Naive thymus-derived CD4-positive, alpha-beta T cell (primary cell): ENCODE measurements at regions of chr10 and their contacts with region 1.

Region 1: GRCh38 chr10:77111611-77112550 is 525.7 kb downstream of the KCNMA1 start:
- DNase-seq: peak in 5 of 9 donors; percentile 12 to 39 (median 28)
- ATAC-seq: peak; percentile 57
- H3K4me3 ChIP-seq: no peak overlapping the region
- H3K4me3 Mint-ChIP-seq: no peak overlapping the region
- H3K27ac ChIP-seq: no peak overlapping the region
- H3K27ac Mint-ChIP-seq: no peak overlapping the region
- H3K4me1 ChIP-seq: no peaks in the 10 kb centered on the region
- H3K4me1 Mint-ChIP-seq: no peaks in the 10 kb centered on the region
- H3K27me3 ChIP-seq: no peaks in the 10 kb centered on the region
- H3K27me3 Mint-ChIP-seq: peaks cover 0 to 12% (median 0%) of the 10 kb centered on the region in 5 donors

Region 2: DNA sequence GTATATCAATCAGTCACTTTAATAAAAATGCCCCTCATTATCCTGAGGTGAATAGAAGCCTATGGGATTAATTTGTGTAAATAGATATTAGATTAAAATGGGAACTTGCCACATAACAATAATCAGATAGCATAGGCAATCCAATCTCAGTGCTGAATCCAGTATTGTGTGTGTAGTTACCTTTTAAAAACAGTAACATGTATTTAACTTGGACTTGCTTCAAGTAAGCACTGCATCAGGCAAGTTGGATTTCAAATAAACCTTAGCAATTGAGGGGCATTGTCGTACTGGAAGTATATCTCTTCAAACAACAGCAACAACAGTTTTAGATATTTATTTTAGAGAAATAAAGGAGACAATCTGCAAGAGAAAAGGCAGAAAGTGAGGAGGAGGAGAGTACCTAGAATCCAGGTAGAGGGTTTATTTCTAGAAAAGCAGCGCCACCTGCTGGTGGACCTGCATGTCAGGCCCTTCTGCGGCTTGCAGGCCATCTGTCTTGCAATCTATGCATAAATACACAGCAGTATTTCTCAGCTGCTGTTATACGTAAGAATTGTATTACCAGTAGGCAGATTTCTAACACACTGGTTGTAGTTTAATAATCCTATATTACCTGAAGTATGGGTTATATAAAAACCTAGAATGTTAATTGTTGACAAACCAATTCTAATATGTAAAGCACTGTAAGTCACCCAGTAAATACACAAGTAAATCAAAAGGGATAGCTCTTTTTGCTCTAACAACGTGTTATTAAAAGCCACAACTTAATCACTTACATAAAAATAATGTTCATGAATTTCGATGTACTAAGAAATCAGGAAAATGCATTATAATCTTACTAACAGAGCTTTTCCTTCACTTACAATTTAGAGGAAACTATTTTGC is 127.1 kb before region 1 on chr10:
- CTCF ChIA-PET with region 1: no interaction called
- POLR2A ChIA-PET with region 1: no interaction called
- intact Hi-C with region 1: loop called in 1 of 2 experiments (anchors 10 kb)
- DNase-seq: peak; percentile 14 to 58 (median 51)
- ATAC-seq: peak; percentile 50
- H3K4me3 ChIP-seq: no peak overlapping the region
- H3K4me3 Mint-ChIP-seq: no peak overlapping the region
- H3K27ac ChIP-seq: no peak overlapping the region
- H3K27ac Mint-ChIP-seq: no peak overlapping the region
- H3K4me1 ChIP-seq: no peaks in the 10 kb centered on the region
- H3K4me1 Mint-ChIP-seq: no peaks in the 10 kb centered on the region
- H3K27me3 ChIP-seq: no peaks in the 10 kb centered on the region
- H3K27me3 Mint-ChIP-seq: peaks cover 0 to 11% (median 6%) of the 10 kb centered on the region in 5 donors